ENCODE measurements at regions of chr5 and their contacts with region 1.

Region 1: DNA sequence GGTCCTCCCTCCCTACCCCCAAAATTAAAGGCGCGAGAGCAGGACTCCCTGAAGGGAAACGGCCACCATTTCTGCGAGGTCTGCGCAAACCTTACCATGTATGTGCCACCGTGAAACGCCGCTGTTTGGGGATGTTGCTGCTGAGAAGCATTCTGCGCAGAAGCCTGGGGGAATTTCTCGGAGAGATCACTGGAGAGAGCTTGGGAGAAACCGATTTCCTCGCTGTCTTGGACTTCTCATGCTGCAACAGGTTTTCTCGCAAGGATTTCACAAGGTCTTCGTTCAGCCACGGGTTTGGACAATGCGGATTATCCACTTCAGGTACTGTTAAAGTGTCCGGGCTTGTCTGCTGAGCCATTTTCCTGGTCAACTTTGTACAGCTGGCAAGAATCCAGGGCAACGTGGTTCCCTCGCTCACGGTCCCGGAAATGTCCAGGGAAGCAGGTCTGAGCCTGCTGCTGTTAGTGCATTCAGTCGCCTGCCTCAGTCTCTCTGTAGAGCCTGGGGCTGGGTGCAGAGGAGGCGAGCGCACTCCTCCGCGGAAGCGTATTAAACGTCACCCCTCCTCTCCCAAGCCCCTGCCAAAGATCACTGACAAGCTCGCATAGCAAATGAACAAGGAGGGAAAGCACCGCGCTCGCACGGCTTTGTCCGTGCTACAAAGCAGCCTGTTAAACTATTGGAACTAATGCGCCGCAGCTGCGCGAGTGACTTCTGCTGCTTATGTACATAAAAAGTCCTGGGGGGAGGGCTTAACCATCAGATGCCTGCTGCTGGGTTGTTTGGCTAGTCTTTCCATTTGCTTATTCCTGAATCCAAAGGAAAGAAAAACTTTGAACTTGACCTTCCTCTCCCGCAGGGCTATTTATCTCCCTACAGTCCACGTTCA is 125.1 kb downstream of the PDE4D start:
- DNase-seq: no peak
- H3K4me3 Mint-ChIP-seq: peak overlapping the region; percentile 79
- H3K27ac Mint-ChIP-seq: peak overlapping the region; percentile 26
- H3K4me1 Mint-ChIP-seq: peaks cover 18% of the 10 kb centered on the region
- H3K27me3 Mint-ChIP-seq: peaks cover 34% of the 10 kb centered on the region

Region 2: GRCh38 chr5:59598547-59598874 is 169.9 kb before region 1 on chr5:
- intact Hi-C with region 1: loop called (anchors 5 kb)
- DNase-seq: no peak
- H3K4me3 Mint-ChIP-seq: no peak overlapping the region
- H3K27ac Mint-ChIP-seq: no peak overlapping the region
- H3K4me1 Mint-ChIP-seq: peaks cover 36% of the 10 kb centered on the region
- H3K27me3 Mint-ChIP-seq: peaks cover 3% of the 10 kb centered on the region

Region 3: GRCh38 chr5:59738024-59738423 is 30.4 kb before region 1 on chr5:
- intact Hi-C with region 1: no loop called
- DNase-seq: no peak
- H3K4me3 Mint-ChIP-seq: no peak overlapping the region
- H3K27ac Mint-ChIP-seq: no peak overlapping the region
- H3K4me1 Mint-ChIP-seq: no peaks in the 10 kb centered on the region
- H3K27me3 Mint-ChIP-seq: peaks cover 5% of the 10 kb centered on the region

Region 4: GRCh38 chr5:59749782-59750520 is 18.4 kb before region 1 on chr5:
- intact Hi-C with region 1: loop called (anchors 2 kb)
- DNase-seq: no peak
- H3K4me3 Mint-ChIP-seq: no peak overlapping the region
- H3K27ac Mint-ChIP-seq: no peak overlapping the region
- H3K4me1 Mint-ChIP-seq: no peaks in the 10 kb centered on the region
- H3K27me3 Mint-ChIP-seq: no peaks in the 10 kb centered on the region

Region 5: DNA sequence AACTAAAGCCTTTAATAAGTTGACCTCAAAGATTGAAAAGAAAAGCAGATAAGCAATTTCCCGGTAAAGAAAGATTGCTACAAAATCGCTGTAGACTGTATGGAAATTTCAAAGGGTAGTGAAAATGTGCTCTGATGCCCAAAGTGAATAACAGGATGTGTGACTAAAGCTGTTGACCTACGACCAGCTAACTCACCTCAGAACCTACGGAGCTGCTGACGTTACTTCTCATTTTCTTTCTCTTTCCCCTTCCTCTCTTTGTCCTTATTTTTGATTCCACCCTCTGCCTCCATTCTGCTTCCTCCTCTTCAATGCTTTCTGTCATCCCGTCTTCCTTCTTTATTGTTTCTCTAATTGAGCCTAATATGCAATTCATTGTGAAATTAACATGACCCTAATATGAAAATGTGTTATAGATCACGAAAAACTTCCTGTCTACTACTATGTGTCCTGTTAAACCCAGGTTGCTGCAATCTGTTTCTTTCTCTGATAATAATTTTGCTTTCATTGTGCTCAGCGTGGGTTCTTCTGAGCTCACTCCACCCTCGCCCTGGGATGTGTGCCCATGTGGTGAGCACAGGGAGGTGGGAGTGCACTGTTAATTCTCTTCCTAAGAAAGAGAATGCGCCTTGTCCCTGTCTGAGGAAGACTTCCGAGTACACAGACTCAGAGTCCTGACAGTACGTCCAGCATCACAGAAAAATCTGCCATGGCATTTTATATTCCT is 22.2 kb after region 1 on chr5:
- intact Hi-C with region 1: loop called (anchors 2 kb)
- DNase-seq: no peak
- H3K4me3 Mint-ChIP-seq: peak overlapping the region; percentile 13
- H3K27ac Mint-ChIP-seq: peak overlapping the region; percentile 76
- H3K4me1 Mint-ChIP-seq: peaks cover 20% of the 10 kb centered on the region
- H3K27me3 Mint-ChIP-seq: peaks cover 7% of the 10 kb centered on the region

Region 6: DNA sequence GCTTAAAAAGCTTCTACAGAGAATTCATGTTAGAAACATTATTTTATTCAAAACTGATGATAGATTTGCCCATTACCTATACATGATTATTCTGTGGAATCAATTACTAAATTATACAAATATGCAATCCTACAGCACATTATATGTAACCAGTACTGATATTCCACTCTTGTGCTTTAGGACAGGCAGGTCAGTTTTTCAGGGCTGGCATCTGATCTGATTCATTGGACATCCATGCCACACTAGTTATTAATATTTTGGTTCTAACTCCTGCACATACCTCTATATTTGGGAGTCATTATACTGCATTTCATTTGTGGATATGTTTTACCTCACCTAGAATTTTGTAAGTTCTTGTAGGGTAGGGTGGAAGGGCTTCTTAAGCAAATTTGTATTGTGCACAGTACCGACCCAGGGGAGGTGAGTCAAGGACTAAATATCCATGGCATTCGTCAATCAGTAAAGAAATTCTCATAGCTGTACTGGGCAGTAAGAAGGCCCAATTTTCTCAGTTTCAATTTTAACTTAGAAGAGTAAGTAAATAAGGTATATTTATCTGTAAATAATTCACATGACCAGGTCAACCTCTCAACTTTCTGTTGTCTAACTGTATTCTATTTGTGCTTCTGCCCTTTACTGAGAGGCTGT is 1042.2 kb after region 1 on chr5:
- intact Hi-C with region 1: no loop called
- DNase-seq: no peak
- H3K4me3 Mint-ChIP-seq: no peak overlapping the region
- H3K27ac Mint-ChIP-seq: no peak overlapping the region
- H3K4me1 Mint-ChIP-seq: no peaks in the 10 kb centered on the region
- H3K27me3 Mint-ChIP-seq: peaks cover 12% of the 10 kb centered on the region